Calu3 (cell line): ENCODE measurements at regions of chr2 and their contacts with region 1.

Region 1: GRCh38 chr2:21754164-21754788 is 630.5 kb downstream of the TDRD15 start:
- DNase-seq: peak; percentile 5
- H3K4me3 Mint-ChIP-seq: no peak overlapping the region
- H3K27ac Mint-ChIP-seq: no peak overlapping the region
- H3K4me1 Mint-ChIP-seq: no peaks in the 10 kb centered on the region
- H3K27me3 Mint-ChIP-seq: no peaks in the 10 kb centered on the region
- CTCF ChIP-seq: no peak

Region 2: GRCh38 chr2:23745068-23745725 is 1990.9 kb after region 1 on chr2:
- CTCF ChIA-PET with region 1: interaction called, 10 read pairs
- intact Hi-C with region 1: no loop called
- DNase-seq: no peak
- H3K4me3 Mint-ChIP-seq: no peak overlapping the region
- H3K27ac Mint-ChIP-seq: no peak overlapping the region
- H3K4me1 Mint-ChIP-seq: no peaks in the 10 kb centered on the region
- H3K27me3 Mint-ChIP-seq: no peaks in the 10 kb centered on the region
- CTCF ChIP-seq: no peak